Keratinocyte (primary cell): ENCODE measurements at regions of chr3 and their contacts with region 1.

Region 1: DNA sequence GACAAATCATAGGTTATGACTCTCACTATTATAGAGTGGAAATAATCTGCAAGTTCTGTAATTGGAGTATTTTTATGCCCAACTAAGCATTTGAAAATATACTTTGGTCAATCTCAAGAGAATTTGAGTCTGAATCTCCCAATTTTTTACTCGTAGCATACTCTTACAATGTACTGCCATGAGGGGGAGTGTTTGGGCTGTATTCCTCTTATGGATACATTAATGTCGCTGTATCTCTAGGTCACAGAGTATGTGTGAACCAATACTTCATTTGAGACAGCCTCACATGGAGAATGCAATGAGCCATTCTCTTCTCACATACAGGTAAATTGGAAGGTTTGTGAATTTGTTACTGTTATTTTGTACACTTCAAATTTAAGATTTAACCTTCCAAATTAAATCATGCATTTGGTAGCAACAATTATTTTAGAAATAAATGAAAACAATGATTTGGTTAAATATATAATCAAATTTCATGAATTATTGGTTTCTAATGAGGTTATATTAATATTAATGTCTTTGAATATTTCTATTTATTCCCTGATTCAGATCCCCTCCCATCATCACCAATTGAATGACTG is 5.5 kb upstream of the CD200 start:
- DNase-seq: peak; percentile 17
- H3K4me3 ChIP-seq: no peak overlapping the region
- H3K27ac ChIP-seq: no peak overlapping the region
- H3K4me1 ChIP-seq: no peaks in the 10 kb centered on the region
- H3K27me3 ChIP-seq: no peaks in the 10 kb centered on the region
- CTCF ChIP-seq: peak in 2 of 3 experiments; percentile 46 to 66

Region 2: GRCh38 chr3:112199619-112200316 is 127.7 kb before region 1 on chr3:
- dilution Hi-C with region 1: no loop called
- DNase-seq: peak; percentile 4
- H3K4me3 ChIP-seq: no peak overlapping the region
- H3K27ac ChIP-seq: no peak overlapping the region
- H3K4me1 ChIP-seq: no peaks in the 10 kb centered on the region
- H3K27me3 ChIP-seq: no peaks in the 10 kb centered on the region
- CTCF ChIP-seq: peak in 1 of 3 experiments; percentile 14

Region 3: GRCh38 chr3:112357930-112358780 is 30.7 kb after region 1 on chr3:
- dilution Hi-C with region 1: no loop called
- DNase-seq: no peak
- H3K4me3 ChIP-seq: no peak overlapping the region
- H3K27ac ChIP-seq: no peak overlapping the region
- H3K4me1 ChIP-seq: no peaks in the 10 kb centered on the region
- H3K27me3 ChIP-seq: no peaks in the 10 kb centered on the region
- CTCF ChIP-seq: no peak

Region 4: GRCh38 chr3:112446343-112446742 is 118.9 kb after region 1 on chr3:
- dilution Hi-C with region 1: no loop called
- DNase-seq: no peak
- H3K4me3 ChIP-seq: no peak overlapping the region
- H3K27ac ChIP-seq: no peak overlapping the region
- H3K4me1 ChIP-seq: no peaks in the 10 kb centered on the region
- H3K27me3 ChIP-seq: no peaks in the 10 kb centered on the region
- CTCF ChIP-seq: no peak

Region 5: GRCh38 chr3:112519424-112520001 is 192.1 kb after region 1 on chr3:
- dilution Hi-C with region 1: loop called (anchors 25 kb)
- DNase-seq: no peak
- H3K4me3 ChIP-seq: no peak overlapping the region
- H3K27ac ChIP-seq: no peak overlapping the region
- H3K4me1 ChIP-seq: no peaks in the 10 kb centered on the region
- H3K27me3 ChIP-seq: no peaks in the 10 kb centered on the region
- CTCF ChIP-seq: peak in 2 of 3 experiments; percentile 53 to 62